OCI-LY7 (cell line): ENCODE measurements at regions of chr7 and their contacts with region 1.

Region 1: DNA sequence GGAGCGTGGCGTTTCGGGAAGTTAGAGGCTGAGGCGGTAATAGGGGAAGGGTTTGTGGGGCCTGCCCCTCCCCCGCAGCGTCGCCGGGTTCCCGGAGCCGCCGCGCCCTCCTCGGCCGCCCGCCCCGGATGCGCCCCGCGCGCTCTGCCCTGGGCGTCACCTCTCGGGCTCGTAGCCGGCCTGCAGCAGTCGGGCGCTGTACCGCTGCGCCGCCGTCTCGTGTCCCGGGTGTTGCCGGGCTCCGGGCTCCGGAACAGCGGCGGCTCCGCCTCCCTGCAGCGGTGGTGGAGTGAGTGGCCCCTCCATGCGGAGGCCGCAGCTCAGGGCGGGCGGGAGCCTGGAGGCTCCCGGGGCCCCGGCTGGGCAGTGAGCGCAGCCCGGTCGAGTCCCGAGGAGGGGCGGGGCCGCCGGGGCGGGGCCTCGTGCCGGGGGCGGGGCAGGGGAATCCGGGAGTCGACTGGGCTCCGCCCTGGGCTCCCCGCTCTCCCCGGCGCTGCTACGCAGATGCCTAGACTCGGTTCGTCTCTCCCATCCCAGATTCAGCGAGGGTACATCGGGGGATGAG is at the start of gene IMPDH1:
- DNase-seq: peak; percentile 57
- H3K4me3 ChIP-seq: peak within 1 kb of the TSS; percentile 72
- H3K27ac ChIP-seq: no peak within 1 kb of the TSS
- H3K4me1 ChIP-seq: peaks cover 10% of the 10 kb centered on the region
- CTCF ChIP-seq: no peak
- total RNA-seq, gene IMPDH1: 23.3 and 26.6 TPM in 2 replicates

Region 2: GRCh38 chr7:128099204-128099671 is 310.4 kb before region 1 on chr7:
- CTCF ChIA-PET with region 1: no interaction called
- POLR2A ChIA-PET with region 1: no interaction called
- intact Hi-C with region 1: no loop called
- DNase-seq: no peak
- H3K4me3 ChIP-seq: no peak overlapping the region
- H3K27ac ChIP-seq: no peak overlapping the region
- H3K4me1 ChIP-seq: peaks cover 22% of the 10 kb centered on the region
- CTCF ChIP-seq: no peak

Region 3: GRCh38 chr7:128259131-128259800 is 150.4 kb before region 1 on chr7:
- CTCF ChIA-PET with region 1: no interaction called
- POLR2A ChIA-PET with region 1: no interaction called
- intact Hi-C with region 1: no loop called
- DNase-seq: no peak
- H3K4me3 ChIP-seq: no peak overlapping the region
- H3K27ac ChIP-seq: no peak overlapping the region
- H3K4me1 ChIP-seq: no peaks in the 10 kb centered on the region
- CTCF ChIP-seq: no peak

Region 4: DNA sequence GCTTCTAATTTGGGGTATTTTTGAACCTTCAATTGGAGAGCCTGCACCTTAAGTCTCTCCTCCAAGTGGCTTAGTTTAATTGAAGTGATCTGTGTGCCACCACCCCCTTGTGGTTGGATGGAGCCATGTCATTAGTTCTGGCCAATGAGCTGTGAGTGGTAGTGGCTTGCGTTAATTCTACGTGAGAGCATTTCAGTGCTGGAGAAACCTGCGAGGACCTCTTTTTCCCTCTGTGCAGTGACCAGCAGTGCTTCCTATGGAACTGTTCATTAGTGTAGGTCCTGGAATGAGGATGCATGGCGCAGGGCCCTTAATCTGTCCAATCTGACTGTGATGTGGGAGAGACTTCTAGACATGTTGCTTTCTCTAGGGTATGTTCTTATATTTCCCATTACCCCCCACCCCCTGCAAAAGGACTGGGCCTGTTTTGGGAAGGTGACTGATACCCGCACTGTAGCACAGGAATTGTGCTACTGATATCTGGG is 49.8 kb after region 1 on chr7:
- CTCF ChIA-PET with region 1: interaction called, 4 read pairs
- POLR2A ChIA-PET with region 1: interaction called, 4 read pairs
- intact Hi-C with region 1: loop called (anchors 2 kb)
- DNase-seq: peak; percentile 77
- H3K4me3 ChIP-seq: no peak overlapping the region
- H3K27ac ChIP-seq: no peak overlapping the region
- H3K4me1 ChIP-seq: peaks cover 33% of the 10 kb centered on the region
- CTCF ChIP-seq: peak; percentile 92